Right cardiac atrium (tissue), 5 donors: ENCODE measurements at regions of chr15 and their contacts with region 1.

Region 1: DNA sequence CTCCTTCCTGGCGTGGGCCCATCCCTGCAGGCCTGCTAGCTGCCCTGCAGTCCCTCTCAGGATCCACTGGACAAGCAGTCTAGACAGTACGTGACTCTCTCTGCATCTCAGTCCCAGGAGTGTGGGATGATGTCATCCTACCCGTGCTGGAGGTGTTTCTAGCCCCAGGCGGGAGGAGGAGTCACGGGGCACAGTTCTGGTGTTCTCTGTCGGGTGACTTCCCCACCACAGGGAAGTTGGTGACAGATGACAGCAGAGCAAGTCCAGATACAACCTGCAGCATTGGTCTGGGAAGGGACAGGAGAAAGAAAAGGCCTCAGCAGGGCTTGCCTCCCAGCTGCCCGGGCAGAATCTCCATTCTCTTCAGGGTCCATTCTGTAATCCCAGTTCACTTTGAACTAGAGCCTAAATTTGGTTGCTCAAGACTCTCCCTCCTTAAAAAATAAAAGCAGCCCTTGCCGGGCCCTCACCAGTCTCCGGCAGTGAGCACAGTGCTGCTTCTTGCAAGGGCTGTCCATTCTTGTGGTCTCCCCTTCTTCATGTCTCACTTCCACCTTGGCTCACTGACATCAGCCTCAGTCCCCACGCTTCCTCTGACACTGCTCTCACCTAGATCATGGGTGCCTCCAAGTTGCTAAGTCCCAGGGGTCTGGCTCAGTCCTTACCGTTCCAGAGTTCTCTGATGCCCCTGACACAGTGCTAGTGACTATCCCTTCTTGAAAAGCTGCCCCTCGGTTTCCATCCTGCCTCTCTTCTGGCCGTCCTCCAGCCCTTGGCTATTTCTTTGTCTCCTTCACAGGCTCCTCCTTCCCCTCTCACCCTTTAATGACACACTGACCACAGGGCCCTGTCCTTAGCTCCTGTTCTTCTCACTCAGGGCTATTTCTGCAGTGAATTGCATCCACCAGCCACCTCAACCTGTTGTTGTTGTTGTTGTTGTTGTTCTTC is 30.8 kb downstream of the SLC28A1 start:
- DNase-seq: peak; percentile 88 to 89 (median 89)
- ATAC-seq: peak; percentile 83
- H3K4me3 ChIP-seq: no peak overlapping the region
- H3K27ac ChIP-seq: peak overlapping the region; percentile 99
- H3K4me1 ChIP-seq: peaks cover 35% of the 10 kb centered on the region
- H3K27me3 ChIP-seq: no peaks in the 10 kb centered on the region

Region 2: DNA sequence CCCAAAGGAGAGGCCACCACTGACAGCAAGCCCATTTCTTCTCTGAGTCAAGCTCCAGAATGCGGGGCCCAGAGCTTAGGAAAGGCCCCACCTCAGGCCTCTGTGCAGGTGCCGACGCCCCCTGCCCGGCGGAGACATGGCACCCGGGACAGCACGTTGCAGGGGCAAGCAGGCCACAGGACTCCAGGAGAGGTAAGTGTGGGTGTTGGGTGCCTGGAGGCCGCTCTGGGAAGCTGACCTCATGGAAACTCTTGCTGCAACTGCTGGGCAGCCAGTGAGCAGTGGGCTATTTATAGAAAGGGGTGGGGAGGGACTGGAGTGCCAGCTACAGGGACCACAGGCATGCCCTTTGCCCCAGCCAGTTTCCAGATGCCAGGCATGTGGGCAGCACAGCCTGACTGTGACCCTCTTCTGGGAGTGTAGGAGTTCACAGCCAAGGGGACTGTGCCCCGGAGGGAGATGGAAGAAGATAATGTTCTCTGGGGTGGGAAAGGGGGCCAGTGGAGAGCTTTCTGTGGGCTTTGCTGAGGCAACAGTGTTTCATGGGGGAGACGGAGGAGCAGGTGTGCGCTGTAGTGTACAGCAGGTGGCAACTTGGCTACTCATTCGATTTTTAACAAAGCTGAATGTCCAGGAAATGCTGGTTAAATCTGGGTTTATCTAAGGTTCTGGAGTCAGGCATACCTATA is 74.4 kb before region 1 on chr15:
- intact Hi-C with region 1: loop called in 1 of 4 experiments (anchors 10 kb)
- DNase-seq: peak; percentile 78 to 86 (median 84)
- ATAC-seq: peak; percentile 87 to 91
- H3K4me3 ChIP-seq: no peak overlapping the region
- H3K27ac ChIP-seq: peak overlapping the region; percentile 85
- H3K4me1 ChIP-seq: peaks cover 12% of the 10 kb centered on the region
- H3K27me3 ChIP-seq: no peaks in the 10 kb centered on the region